Spleen (tissue), 13 donors: ENCODE measurements at regions of chr6 and their contacts with region 1.

Region 1: GRCh38 chr6:31441365-31442267 is 38.2 kb downstream of the MICA start:
- DNase-seq: peak; percentile 96
- H3K4me3 ChIP-seq: peak overlapping the region in 1 of 8 donors; percentile 31
- H3K27ac ChIP-seq: no peak overlapping the region
- H3K4me1 ChIP-seq: peaks cover 0 to 12% (median 8%) of the 10 kb centered on the region in 6 donors
- H3K27me3 ChIP-seq: peaks cover 0 to 19% (median 0%) of the 10 kb centered on the region in 7 donors
- CTCF ChIP-seq: peak; percentile 64 to 91 (median 82)
- POLR2A ChIP-seq: no peak

Region 2: DNA sequence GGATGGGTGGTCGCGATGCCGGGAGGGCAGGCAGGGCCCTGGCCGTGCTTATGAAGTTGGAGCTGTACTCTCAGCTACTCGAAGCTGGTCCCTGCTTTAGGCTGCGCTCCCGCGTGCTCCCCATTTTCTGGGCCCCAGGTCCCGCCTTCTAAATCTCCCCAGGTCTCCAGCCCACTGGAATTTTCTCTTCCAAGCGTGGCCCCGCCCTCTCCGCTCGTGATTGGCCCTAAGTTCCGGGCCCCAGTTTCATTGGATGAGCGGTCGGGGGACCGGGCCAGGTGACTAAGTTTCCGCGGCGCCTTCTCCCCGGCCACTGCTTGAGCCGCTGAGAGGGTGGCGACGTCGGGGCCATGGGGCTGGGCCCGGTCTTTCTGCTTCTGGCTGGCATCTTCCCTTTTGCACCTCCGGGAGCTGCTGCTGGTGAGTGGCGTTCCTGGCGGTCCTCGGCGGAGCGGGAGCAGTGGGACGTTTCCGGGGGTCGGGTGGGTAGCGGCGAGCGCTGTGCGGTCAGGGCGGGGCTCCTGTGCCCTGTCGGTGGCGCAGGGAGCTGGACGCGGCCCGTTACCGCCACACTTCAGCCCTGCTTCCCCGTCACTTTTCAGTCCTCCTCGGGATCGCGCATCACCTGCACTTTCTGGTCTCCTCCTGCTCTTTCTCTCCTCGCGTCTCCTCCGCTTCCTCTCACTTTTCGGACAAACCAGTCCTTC is 38.2 kb before region 1 on chr6 and contains the start of gene MICA:
- intact Hi-C with region 1: loop called (anchors 5 kb)
- DNase-seq: peak; percentile 94
- H3K4me3 ChIP-seq: peak within 1 kb of the TSS; percentile 63 to 89 (median 67)
- H3K27ac ChIP-seq: peak within 1 kb of the TSS; percentile 6 to 99 (median 98)
- H3K4me1 ChIP-seq: peaks cover 17 to 85% (median 64%) of the 10 kb centered on the region in 6 donors
- H3K27me3 ChIP-seq: no peaks in the 10 kb centered on the region
- CTCF ChIP-seq: peak in 4 of 11 experiments; percentile 7 to 30 (median 18)
- POLR2A ChIP-seq: no peak
- total RNA-seq, gene MICA: 14.6 to 19.7 (median 15.2) TPM